Activated T-helper 1 cell treated with anti-CD3 and anti-CD28 coated beads, Interleukin-12 subunit alpha, Interleukin-12 subunit beta, Interleukin-2, Interleukin-4 antibody, amounts not matched to agents 30 ng/mL and 10 ng/mL and 1 ng/mL, durations not matched to agents 14 hours and 24 hours and 36 hours (primary cell): ENCODE measurements at regions of chr11 and their contacts with region 1.

Region 1: DNA sequence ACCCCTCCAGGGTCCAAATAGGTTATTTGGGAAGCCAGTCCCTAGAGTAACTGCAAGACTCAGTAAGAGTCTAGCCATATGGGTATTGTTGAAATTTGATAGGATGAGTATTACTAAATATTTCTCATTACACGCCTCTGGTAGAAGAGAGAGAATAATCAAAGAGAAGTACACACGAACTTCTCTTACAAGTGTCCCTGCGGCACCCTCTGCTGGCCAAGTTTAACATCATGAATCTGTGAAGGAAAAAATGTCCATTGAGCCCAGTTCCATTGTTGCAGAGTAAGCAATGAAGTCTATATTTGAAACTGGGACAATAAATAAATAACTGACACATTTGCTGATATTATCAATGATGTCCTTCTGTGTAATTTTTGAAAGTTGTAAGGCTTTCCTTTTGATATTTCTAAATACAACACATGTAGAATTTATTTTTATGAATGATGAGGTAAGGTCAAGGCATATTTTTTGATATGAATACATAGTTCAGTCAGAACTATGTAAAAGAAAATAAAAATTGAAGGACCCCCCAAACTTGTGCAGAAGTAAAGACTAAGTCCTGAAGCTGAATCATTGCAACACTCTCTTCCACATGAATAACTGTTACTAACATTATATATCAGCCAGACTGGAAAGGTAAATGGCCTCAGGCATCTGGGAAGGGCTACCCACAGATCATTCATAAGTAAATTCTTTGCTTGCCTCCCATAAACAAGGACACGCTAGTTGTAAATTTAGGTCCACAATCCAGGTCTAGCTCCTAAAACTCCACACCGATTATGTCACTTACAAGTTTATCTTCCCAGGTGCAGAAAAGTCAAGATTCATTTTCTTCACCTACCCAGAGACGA is 10.0 kb downstream of the OR51L1 start:
- DNase-seq: no peak
- H3K4me3 Mint-ChIP-seq: no peak overlapping the region
- H3K27ac Mint-ChIP-seq: no peak overlapping the region
- H3K4me1 Mint-ChIP-seq: no peaks in the 10 kb centered on the region
- H3K27me3 Mint-ChIP-seq: no peaks in the 10 kb centered on the region

Region 2: DNA sequence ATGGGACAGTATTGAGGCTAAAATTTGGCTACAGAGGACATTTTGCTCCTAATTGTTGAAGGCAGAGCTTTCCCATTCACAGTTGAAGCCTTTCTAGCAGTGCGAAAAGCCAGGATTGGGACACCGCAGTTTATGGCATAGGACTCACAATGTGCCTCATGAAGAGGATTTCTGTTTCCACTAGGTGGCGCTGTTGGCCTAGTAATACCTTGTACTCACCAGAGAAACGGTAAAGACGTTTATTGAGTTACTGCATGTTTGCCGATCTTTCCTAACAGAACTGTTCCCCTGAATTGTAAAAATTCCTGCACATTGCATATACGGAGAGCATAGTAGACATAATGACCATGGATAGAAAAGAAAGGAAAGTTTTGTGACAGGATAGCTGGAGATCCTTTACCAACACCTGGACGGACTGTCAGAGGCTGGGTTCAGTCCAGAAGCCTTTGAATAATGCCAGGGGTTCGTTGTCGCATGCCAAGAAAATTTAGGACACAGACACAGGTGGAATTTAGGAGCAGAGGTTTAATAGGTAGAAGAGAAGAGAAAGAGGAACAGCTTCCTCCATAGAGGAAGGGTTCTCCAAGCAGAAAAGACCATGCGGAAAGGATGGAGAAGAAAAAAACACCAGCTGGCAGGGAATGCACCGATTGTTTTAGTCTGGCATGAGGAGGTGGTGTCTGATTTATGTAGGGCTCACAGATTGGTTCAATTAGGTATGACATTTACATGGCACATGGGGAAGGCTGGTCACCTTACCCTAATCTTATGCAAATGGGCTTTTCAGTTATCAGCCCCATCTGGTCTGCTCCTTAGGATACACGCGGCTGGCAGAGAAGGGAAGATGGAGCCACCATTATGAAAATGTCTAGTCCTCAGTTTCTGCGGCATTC is 378.2 kb before region 1 on chr11:
- intact Hi-C with region 1: loop called (anchors 2 kb)
- DNase-seq: peak; percentile 44
- H3K4me3 Mint-ChIP-seq: no peak overlapping the region
- H3K27ac Mint-ChIP-seq: no peak overlapping the region
- H3K4me1 Mint-ChIP-seq: no peaks in the 10 kb centered on the region
- H3K27me3 Mint-ChIP-seq: peaks cover 17% of the 10 kb centered on the region

Region 3: DNA sequence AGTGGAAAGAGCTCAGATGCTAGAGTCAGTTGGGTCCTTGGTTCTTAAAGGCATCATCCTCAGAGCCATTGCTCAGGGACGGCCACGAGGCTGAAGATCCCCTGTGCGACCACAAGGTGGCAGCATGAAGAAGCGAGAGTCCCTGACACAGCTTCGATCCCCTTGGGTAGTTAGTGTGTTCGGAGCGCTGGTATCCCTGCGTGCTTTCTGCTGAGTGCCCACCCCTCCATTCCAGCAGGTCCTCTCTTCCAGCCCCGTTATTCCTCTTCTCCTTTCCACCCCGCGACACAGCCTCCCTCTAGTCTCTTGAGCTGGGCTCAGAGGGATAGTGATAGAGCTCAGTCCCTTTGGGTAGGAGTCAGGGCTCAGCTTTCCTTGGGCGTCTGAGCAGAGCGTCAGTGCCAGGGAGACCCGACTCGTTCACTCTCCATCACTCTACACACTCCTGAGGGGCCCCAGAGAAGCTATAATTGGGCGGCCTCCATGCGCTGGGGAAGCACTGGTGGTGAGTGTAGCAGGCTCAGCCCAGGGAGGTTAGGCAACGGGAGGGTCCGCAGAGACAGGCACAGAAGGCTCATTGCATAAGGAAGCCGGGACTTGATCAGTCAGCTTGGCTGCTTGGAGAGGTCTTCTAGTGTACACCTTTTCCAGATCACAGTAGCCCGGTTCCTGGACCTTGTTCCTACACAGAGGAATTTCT is 367.5 kb before region 1 on chr11 and contains the start of gene OR51D1:
- intact Hi-C with region 1: loop called (anchors 1 kb)
- DNase-seq: peak; percentile 52
- H3K4me3 Mint-ChIP-seq: no peak within 1 kb of the TSS
- H3K27ac Mint-ChIP-seq: no peak within 1 kb of the TSS
- H3K4me1 Mint-ChIP-seq: no peaks in the 10 kb centered on the region
- H3K27me3 Mint-ChIP-seq: peaks cover 2% of the 10 kb centered on the region
- total RNA-seq, gene OR51D1: not detected in 2 replicates